Caco-2 (cell line): ENCODE measurements at regions of chr16 and their contacts with region 1.

Region 1: GRCh38 chr16:4183237-4184036 is 58.4 kb downstream of the SRL start:
- DNase-seq: peak; percentile 89 to 97
- H3K4me3 ChIP-seq: peak overlapping the region; percentile 78
- H3K4me3 Mint-ChIP-seq: peak overlapping the region; percentile 68
- H3K27ac Mint-ChIP-seq: peak overlapping the region; percentile 71
- H3K4me1 ChIP-seq: 0 out of 2 replicates have a peak, but pooled peaks cover 4% of the 10 kb centered on the region
- H3K4me1 Mint-ChIP-seq: peaks cover 14% of the 10 kb centered on the region
- H3K27me3 ChIP-seq: no peaks in the 10 kb centered on the region
- H3K27me3 Mint-ChIP-seq: no peaks in the 10 kb centered on the region
- CTCF ChIP-seq: no peak

Region 2: GRCh38 chr16:4123616-4124265 is 59.7 kb before region 1 on chr16:
- CTCF ChIA-PET with region 1: no interaction called
- POLR2A ChIA-PET with region 1: no interaction called
- intact Hi-C with region 1: loop called (anchors 5 kb)
- DNase-seq: no peak
- H3K4me3 ChIP-seq: no peak overlapping the region
- H3K4me3 Mint-ChIP-seq: no peak overlapping the region
- H3K27ac Mint-ChIP-seq: no peak overlapping the region
- H3K4me1 ChIP-seq: no peaks in the 10 kb centered on the region
- H3K4me1 Mint-ChIP-seq: peaks cover 6% of the 10 kb centered on the region
- H3K27me3 ChIP-seq: no peaks in the 10 kb centered on the region
- H3K27me3 Mint-ChIP-seq: no peaks in the 10 kb centered on the region
- CTCF ChIP-seq: no peak

Region 3: DNA sequence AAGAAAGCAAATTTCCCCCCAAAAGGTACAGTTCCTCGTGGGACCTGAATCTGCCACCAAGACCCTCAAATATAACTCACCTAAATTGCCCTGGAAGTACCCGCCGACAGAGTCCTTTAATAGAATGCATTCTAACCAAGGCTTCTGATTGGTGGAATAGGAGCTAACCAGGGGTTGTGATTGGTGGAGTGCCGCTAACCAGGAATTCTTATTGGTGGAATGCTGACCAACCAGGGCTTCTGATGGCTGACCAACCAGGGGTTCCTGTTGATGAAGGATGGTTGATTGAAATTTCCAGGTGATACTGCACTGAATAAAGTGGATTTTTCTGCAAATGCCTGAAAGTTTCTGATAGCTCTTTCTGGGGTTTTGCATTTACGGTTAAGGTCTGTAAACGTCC is 82.9 kb after region 1 on chr16:
- CTCF ChIA-PET with region 1: no interaction called
- POLR2A ChIA-PET with region 1: no interaction called
- intact Hi-C with region 1: no loop called
- DNase-seq: peak in 1 of 2 experiments; percentile 32
- H3K4me3 ChIP-seq: no peak overlapping the region
- H3K4me3 Mint-ChIP-seq: no peak overlapping the region
- H3K27ac Mint-ChIP-seq: no peak overlapping the region
- H3K4me1 ChIP-seq: peaks cover 6% of the 10 kb centered on the region
- H3K4me1 Mint-ChIP-seq: no peaks in the 10 kb centered on the region
- H3K27me3 ChIP-seq: no peaks in the 10 kb centered on the region
- H3K27me3 Mint-ChIP-seq: no peaks in the 10 kb centered on the region
- CTCF ChIP-seq: no peak